HEK293 (cell line): ENCODE measurements at regions of chr6 and their contacts with region 1.

Region 1: DNA sequence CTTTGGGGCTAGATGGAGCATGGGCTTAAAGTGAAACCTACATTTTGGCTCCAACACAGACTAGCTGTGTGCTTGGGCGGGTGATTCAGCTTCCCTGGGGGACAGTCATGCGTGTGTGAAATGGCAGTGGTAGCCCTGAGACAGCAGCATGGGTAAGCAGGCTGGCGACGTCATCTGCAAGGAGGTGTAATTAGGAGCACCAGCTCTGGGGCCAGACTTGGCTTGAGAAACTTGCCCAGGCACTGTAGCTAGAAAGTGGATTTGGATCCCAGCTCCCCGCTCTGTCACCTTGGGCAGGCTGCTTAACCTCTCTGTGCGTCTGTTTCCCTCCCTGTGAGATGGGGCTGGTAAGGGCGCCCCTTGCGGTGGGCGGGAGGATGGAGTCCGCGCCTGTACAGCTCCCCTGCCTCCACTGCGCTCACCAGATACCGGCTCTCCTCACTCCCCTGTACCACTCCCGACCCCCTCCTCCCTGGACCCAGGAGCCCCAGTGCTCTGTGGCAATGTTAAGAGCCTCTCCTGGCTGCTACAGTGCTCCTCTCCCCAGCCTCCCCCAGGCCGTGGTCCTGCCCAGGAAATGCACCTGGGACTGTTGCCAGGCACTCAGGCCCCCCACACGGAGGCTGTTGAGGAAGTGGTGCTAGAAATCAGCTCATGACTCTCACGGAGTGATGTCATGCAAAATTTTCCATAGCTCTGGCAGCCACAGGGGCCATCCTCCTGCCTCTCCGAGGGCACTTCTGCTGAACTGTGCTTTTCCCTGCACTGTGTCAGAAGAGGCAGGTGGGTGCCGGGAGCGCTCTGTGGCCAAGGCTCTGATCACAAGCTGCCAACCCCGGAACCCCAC is 44.6 kb downstream of the SYNJ2 start:
- H3K4me3 ChIP-seq: peak overlapping the region; percentile 18
- H3K27ac ChIP-seq: peak overlapping the region; percentile 45; the same call in 1 of the 2 replicates
- H3K4me1 ChIP-seq: peaks cover 16% of the 10 kb centered on the region
- CTCF ChIP-seq: peak; percentile 92

Region 2: DNA sequence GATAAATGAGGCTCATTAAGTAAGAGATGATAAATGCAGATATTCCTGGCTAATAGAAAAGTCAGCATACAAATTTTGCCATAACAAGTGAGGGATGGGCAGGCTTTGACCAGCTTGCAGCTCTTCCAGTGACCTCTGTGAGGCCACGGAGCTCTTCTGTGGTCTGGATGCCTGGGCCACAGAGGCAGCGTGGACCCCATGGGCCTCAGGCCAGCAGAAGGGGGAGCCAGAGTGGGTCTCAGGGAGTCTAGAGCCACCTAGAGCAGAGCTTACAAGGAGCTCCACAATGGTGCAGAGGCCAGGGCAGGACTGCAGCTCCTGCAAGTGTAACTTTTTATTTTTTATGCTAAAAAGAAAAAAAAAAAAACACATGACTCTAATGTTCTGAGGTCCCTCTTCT is 1084.0 kb before region 1 on chr6:
- CTCF ChIA-PET with region 1: no interaction called
- POLR2A ChIA-PET with region 1: no interaction called
- H3K4me3 ChIP-seq: no peak overlapping the region
- H3K27ac ChIP-seq: no peak overlapping the region
- H3K4me1 ChIP-seq: peaks cover 22% of the 10 kb centered on the region
- CTCF ChIP-seq: no peak

Region 3: DNA sequence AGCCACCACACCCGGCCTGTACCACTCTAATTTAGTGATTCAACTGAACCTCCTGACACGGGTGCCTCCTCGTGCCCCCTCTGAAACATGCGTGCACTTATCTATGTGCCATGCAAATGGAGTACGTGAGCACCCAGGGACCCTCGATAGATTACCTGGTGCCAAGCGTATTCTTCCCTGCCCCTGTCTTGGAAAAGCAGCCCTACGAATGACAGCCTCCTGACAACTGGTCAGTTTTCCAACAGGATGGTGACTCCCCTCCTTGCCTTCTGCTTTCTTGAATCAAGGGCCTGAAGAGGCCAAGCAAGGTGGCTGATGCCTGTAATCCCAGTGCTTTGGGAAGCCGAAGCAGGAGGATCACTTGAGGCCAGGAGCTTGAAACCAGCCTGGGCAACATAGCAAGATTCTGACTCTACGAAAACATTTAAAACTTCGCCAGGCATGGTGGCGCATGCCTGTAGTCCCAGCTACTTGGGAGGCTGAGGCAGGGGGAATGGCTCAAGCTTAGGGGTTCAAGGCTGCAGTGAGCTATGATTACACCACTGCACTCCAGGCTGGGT is 70.0 kb before region 1 on chr6:
- CTCF ChIA-PET with region 1: interaction called, 10 read pairs
- POLR2A ChIA-PET with region 1: no interaction called
- H3K4me3 ChIP-seq: no peak overlapping the region
- H3K27ac ChIP-seq: no peak overlapping the region
- H3K4me1 ChIP-seq: no peaks in the 10 kb centered on the region
- CTCF ChIP-seq: no peak

Region 4: DNA sequence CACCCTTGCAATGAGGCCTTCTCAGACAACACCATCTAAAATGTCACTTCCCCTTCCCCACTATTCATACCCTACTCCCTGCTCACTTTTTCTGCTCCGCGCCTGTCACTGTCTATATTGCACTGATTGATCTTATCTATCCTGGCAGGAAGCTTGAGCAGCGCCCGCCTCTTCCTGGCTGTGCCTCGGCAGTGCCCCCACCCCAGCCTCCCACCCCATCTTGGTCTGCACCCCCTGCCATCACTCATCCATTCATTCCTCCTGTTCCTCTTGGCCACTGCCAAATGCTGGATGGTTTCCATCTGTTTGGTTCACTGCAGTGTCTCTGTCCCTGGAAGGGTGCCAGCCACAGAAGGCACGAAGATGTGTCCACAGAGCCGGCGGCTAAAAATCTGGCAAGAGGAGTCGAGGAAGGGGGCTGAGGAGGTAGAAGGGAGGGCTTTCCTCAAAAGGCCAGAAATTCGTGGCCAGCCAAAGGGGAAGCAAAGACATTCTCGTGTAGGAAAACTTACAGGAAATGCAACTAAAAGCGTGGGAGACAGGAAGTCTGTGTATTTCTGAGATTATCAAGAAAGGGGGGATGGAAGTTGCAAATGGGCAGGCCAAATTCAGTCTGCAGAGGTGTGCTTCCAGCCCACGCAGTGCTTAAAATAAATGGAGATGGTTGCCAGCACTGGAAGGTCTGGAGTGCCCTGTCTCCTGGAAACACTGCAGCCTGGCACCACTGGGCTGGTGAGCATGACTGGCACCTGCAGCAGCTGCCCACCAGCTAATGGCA is 17.0 kb before region 1 on chr6:
- CTCF ChIA-PET with region 1: interaction called, 46 read pairs
- POLR2A ChIA-PET with region 1: interaction called, 9 read pairs
- H3K4me3 ChIP-seq: no peak overlapping the region
- H3K27ac ChIP-seq: no peak overlapping the region
- H3K4me1 ChIP-seq: peaks cover 6% of the 10 kb centered on the region
- CTCF ChIP-seq: no peak

Region 5: DNA sequence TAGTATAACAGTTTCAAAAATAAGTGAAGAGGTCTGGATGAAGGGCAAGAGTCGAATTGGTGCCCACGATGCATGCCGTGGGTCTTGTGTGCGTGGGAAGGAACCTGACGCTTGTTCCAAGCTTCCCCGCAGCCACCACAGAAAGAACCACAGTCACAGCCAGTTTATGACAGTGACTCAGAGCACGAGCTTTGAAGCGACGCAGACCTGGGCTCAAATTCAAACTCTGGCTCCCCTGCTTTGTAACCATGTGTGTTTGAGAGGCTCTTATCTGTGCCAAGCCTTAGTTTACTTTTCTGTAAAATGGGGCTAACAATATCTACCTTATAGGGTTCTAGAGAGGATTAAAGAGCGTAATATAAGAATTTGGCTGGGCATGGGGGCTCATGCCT is 20.8 kb after region 1 on chr6:
- CTCF ChIA-PET with region 1: interaction called, 33 read pairs
- POLR2A ChIA-PET with region 1: interaction called, 33 read pairs
- H3K4me3 ChIP-seq: no peak overlapping the region
- H3K27ac ChIP-seq: no peak overlapping the region
- H3K4me1 ChIP-seq: peaks cover 6% of the 10 kb centered on the region
- CTCF ChIP-seq: no peak

Region 6: GRCh38 chr6:158072083-158072721 is 45.9 kb after region 1 on chr6:
- CTCF ChIA-PET with region 1: interaction called, 33 read pairs
- POLR2A ChIA-PET with region 1: no interaction called
- H3K4me3 ChIP-seq: no peak overlapping the region
- H3K27ac ChIP-seq: no peak overlapping the region
- H3K4me1 ChIP-seq: no peaks in the 10 kb centered on the region
- CTCF ChIP-seq: peak; percentile 64; the same call in 1 of the 2 replicates